Activated CD8-positive, alpha-beta memory T cell treated with anti-CD3 and anti-CD28 coated beads, Interleukin-2, amount 10 ng/mL, durations not matched to agents 7 days and 5 days (primary cell): ENCODE measurements at regions of chr10 and their contacts with region 1.

Region 1: GRCh38 chr10:102904346-102904745 is 13.7 kb upstream of the CNNM2 start:
- DNase-seq: no peak
- ATAC-seq: no peak
- H3K4me3 Mint-ChIP-seq: no peak overlapping the region
- H3K27ac Mint-ChIP-seq: no peak overlapping the region
- H3K4me1 Mint-ChIP-seq: no peaks in the 10 kb centered on the region
- H3K27me3 Mint-ChIP-seq: no peaks in the 10 kb centered on the region

Region 2: GRCh38 chr10:102835007-102835482 is 69.3 kb before region 1 on chr10:
- CTCF ChIA-PET with region 1: interaction called, 38 read pairs
- DNase-seq: peak; percentile 80
- ATAC-seq: peak; percentile 97
- H3K4me3 Mint-ChIP-seq: no peak overlapping the region
- H3K27ac Mint-ChIP-seq: no peak overlapping the region
- H3K4me1 Mint-ChIP-seq: no peaks in the 10 kb centered on the region
- H3K27me3 Mint-ChIP-seq: peaks cover 13% of the 10 kb centered on the region

Region 3: GRCh38 chr10:102869258-102870198 is 34.8 kb before region 1 on chr10 and contains the start of gene AS3MT:
- CTCF ChIA-PET with region 1: interaction called, 11 read pairs
- DNase-seq: peak; percentile 43
- ATAC-seq: peak; percentile 94
- H3K4me3 Mint-ChIP-seq: peak within 1 kb of the TSS; percentile 58
- H3K27ac Mint-ChIP-seq: peak within 1 kb of the TSS; percentile 35
- H3K4me1 Mint-ChIP-seq: peaks cover 11% of the 10 kb centered on the region
- H3K27me3 Mint-ChIP-seq: peaks cover 22% of the 10 kb centered on the region
- total RNA-seq, gene AS3MT: 0.41 TPM in 1 of 2 experiments, not detected in the other

Region 4: GRCh38 chr10:102965455-102965854 is 61.1 kb after region 1 on chr10:
- CTCF ChIA-PET with region 1: no interaction called
- DNase-seq: no peak
- ATAC-seq: no peak
- H3K4me3 Mint-ChIP-seq: no peak overlapping the region
- H3K27ac Mint-ChIP-seq: no peak overlapping the region
- H3K4me1 Mint-ChIP-seq: no peaks in the 10 kb centered on the region
- H3K27me3 Mint-ChIP-seq: no peaks in the 10 kb centered on the region